CD8-positive, alpha-beta memory T cell (primary cell): ENCODE measurements at regions of chr16 and their contacts with region 1.

Region 1: GRCh38 chr16:89706507-89707263 is 5.2 kb upstream of the SPATA2L start:
- DNase-seq: no peak
- H3K4me3 ChIP-seq: no peak overlapping the region
- H3K4me3 Mint-ChIP-seq: no peak overlapping the region
- H3K27ac ChIP-seq: no peak overlapping the region
- H3K27ac Mint-ChIP-seq: peak overlapping the region in 1 of 8 donors; percentile 17
- H3K4me1 ChIP-seq: peaks cover 13% of the 10 kb centered on the region
- H3K4me1 Mint-ChIP-seq: peaks cover 13 to 15% (median 15%) of the 10 kb centered on the region in 3 donors
- H3K27me3 ChIP-seq: no peaks in the 10 kb centered on the region
- H3K27me3 Mint-ChIP-seq: no peaks in the 10 kb centered on the region

Region 2: GRCh38 chr16:89574681-89575246 is 131.9 kb before region 1 on chr16:
- CTCF ChIA-PET with region 1: no interaction called
- POLR2A ChIA-PET with region 1: no interaction called
- DNase-seq: peak in 3 of 5 donors; percentile 44 to 67 (median 47)
- H3K4me3 ChIP-seq: peak overlapping the region; percentile 28
- H3K4me3 Mint-ChIP-seq: peak overlapping the region in 6 of 7 donors; percentile 49 to 77 (median 64)
- H3K27ac ChIP-seq: no peak overlapping the region
- H3K27ac Mint-ChIP-seq: peak overlapping the region in 1 of 8 donors; percentile 47
- H3K4me1 ChIP-seq: peaks cover 11% of the 10 kb centered on the region
- H3K4me1 Mint-ChIP-seq: peaks cover 6 to 20% (median 7%) of the 10 kb centered on the region in 3 donors
- H3K27me3 ChIP-seq: peaks cover 8% of the 10 kb centered on the region
- H3K27me3 Mint-ChIP-seq: peaks cover 8 to 21% of the 10 kb centered on the region in 2 donors

Region 3: DNA sequence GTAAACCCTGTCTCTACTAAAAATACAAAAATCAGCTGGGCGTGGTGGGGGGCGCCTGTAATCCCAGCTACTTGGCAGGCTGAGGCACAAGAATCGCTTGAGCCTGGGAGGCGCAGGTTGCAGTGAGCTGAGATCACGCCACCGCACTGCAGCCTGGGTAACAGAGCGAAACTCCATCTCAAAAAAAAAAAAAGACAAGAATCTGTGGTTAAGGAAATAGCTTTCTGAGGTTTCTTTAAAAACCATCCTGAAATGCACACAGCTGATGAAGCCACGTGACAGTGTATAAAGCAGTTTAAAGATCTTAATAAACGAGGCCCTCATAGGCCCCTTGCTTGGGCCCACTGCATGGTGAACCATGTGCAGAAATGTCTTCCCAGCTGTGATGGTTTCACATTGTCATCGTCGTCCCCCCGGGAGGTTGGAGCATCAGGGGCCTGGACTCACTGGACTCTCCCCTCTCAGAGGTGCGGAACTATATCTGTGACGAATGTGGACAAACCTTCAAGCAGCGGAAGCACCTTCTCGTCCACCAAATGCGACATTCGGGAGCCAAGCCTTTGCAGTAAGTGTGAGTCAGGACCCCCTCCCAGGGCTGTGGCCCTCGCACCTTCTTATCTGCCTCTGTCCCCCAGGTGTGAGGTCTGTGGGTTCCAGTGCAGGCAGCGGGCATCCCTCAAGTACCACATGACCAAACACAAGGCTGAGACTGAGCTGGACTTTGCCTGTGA is 30.8 kb after region 1 on chr16:
- CTCF ChIA-PET with region 1: interaction called, 24 read pairs
- POLR2A ChIA-PET with region 1: interaction called, 7 read pairs
- DNase-seq: peak; percentile 24 to 73 (median 71)
- H3K4me3 ChIP-seq: no peak overlapping the region
- H3K4me3 Mint-ChIP-seq: peak overlapping the region; percentile 19 to 80 (median 63)
- H3K27ac ChIP-seq: no peak overlapping the region
- H3K27ac Mint-ChIP-seq: peak overlapping the region; percentile 23 to 94 (median 78)
- H3K4me1 ChIP-seq: peaks cover 40% of the 10 kb centered on the region
- H3K4me1 Mint-ChIP-seq: peaks cover 41 to 71% (median 51%) of the 10 kb centered on the region in 3 donors
- H3K27me3 ChIP-seq: no peaks in the 10 kb centered on the region
- H3K27me3 Mint-ChIP-seq: no peaks in the 10 kb centered on the region

Region 4: DNA sequence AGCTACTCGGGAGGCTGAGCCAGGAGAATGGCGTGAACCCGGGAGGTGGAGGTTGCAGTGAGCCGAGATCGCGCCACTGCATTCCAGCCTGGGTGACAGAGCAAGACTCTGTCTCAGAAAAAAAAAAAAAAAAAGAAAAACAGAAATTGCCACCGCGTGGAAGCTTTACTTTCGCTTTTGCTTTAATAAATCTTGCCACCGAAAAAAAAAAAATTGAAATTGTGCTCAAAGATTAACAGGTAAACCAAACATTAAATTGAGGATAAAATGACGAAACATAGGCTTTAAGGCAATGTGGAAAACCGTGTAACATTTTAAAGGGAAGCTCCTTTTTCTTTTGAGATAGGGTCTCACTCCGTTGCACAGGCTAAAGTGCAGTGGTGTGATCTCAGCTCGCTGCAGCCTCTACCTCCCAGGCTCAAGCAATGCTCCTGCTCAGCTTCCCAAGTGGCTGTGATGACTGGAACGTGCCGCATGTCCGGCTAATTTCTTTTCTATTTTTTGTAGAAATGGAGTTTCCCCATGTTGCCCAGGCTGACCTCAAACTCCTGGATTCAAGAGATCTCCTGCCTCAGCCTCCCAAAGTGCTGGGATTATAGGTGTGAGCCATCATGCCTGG is 54.7 kb after region 1 on chr16:
- CTCF ChIA-PET with region 1: interaction called, 14 read pairs
- POLR2A ChIA-PET with region 1: interaction called, 3 read pairs
- DNase-seq: peak in 1 of 5 donors; percentile 41
- H3K4me3 ChIP-seq: peak overlapping the region; percentile 52
- H3K4me3 Mint-ChIP-seq: peak overlapping the region; percentile 85 to 94 (median 90)
- H3K27ac ChIP-seq: peak overlapping the region; percentile 32
- H3K27ac Mint-ChIP-seq: peak overlapping the region; percentile 92 to 99 (median 96)
- H3K4me1 ChIP-seq: peaks cover 31% of the 10 kb centered on the region
- H3K4me1 Mint-ChIP-seq: peaks cover 37 to 66% (median 53%) of the 10 kb centered on the region in 3 donors
- H3K27me3 ChIP-seq: no peaks in the 10 kb centered on the region
- H3K27me3 Mint-ChIP-seq: no peaks in the 10 kb centered on the region

Region 5: GRCh38 chr16:89873972-89874689 is 167.4 kb after region 1 on chr16:
- CTCF ChIA-PET with region 1: interaction called, 20 read pairs
- POLR2A ChIA-PET with region 1: interaction called, 4 read pairs
- DNase-seq: peak; percentile 90 to 95 (median 94)
- H3K4me3 ChIP-seq: peak overlapping the region; percentile 82
- H3K4me3 Mint-ChIP-seq: peak overlapping the region; percentile 90 to 97 (median 93)
- H3K27ac ChIP-seq: peak overlapping the region; percentile 98
- H3K27ac Mint-ChIP-seq: peak overlapping the region; percentile 98 to 100 (median 98)
- H3K4me1 ChIP-seq: peaks cover 21% of the 10 kb centered on the region
- H3K4me1 Mint-ChIP-seq: peaks cover 18 to 28% (median 21%) of the 10 kb centered on the region in 3 donors
- H3K27me3 ChIP-seq: no peaks in the 10 kb centered on the region
- H3K27me3 Mint-ChIP-seq: no peaks in the 10 kb centered on the region

Region 6: DNA sequence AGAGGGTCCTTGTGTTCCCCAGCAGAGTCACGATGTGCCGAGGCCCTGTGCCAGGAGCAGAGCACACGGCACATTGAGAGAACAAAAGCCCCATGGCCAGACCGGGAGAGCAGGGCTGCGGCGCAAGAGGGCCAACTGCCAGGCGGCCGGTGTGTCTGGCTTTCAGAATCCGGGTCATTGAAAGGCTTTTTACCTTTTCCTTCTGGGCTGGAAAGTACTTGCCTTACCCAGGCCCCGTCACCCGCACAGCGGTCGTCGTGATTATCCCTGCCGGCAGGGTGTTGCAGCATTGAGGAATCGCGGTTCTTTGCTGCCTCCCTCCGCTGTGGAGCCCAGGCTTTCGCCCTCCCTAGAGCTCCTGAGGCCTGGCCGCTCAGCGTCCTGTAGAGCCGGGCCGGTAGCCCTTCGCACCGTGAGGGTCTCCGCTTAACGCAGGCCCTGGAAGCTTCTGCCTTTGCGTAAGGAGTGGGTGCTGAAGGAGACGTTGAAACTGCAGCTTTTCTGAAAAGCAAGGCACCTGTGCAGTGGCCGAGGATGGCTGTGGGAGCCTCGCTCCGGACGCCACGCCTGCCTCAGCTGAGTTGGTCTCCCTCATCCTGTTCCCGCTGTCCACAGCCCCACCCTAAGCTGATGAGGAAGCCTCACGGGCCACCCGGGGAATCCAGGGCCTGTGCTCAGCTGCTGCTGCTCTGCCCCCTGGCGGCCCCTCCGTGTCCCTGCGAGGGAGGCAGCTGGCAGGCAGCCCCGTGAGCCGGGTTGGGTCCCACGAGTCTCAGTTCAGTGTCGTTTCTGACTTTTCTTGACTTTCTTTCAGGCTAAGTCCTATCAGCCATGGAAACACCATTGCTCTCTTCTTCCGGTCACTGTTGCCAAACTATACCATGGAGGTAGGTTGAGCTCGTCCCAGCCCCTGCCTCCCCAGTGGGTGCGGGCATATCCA is 203.4 kb after region 1 on chr16:
- CTCF ChIA-PET with region 1: interaction called, 14 read pairs
- POLR2A ChIA-PET with region 1: no interaction called
- DNase-seq: peak; percentile 53 to 75 (median 61)
- H3K4me3 ChIP-seq: no peak overlapping the region
- H3K4me3 Mint-ChIP-seq: peak overlapping the region in 1 of 7 donors; percentile 28
- H3K27ac ChIP-seq: no peak overlapping the region
- H3K27ac Mint-ChIP-seq: no peak overlapping the region
- H3K4me1 ChIP-seq: peaks cover 6% of the 10 kb centered on the region
- H3K4me1 Mint-ChIP-seq: peaks cover 0 to 21% (median 8%) of the 10 kb centered on the region in 3 donors
- H3K27me3 ChIP-seq: no peaks in the 10 kb centered on the region
- H3K27me3 Mint-ChIP-seq: no peaks in the 10 kb centered on the region